Naive thymus-derived CD4-positive, alpha-beta T cell (primary cell): ENCODE measurements at regions of chr2 and their contacts with region 1.

Region 1: GRCh38 chr2:85420536-85421259 is 2.2 kb downstream of the SH2D6 start:
- DNase-seq: peak; percentile 73 to 96 (median 83)
- ATAC-seq: peak; percentile 88
- H3K4me3 ChIP-seq: peak overlapping the region; percentile 22
- H3K4me3 Mint-ChIP-seq: peak overlapping the region; percentile 60 to 96 (median 76)
- H3K27ac ChIP-seq: peak overlapping the region; percentile 23
- H3K27ac Mint-ChIP-seq: peak overlapping the region; percentile 38 to 100 (median 85)
- H3K4me1 ChIP-seq: peaks cover 20 to 22% of the 10 kb centered on the region in 2 donors
- H3K4me1 Mint-ChIP-seq: peaks cover 14 to 26% (median 16%) of the 10 kb centered on the region in 7 donors
- H3K27me3 ChIP-seq: no peaks in the 10 kb centered on the region
- H3K27me3 Mint-ChIP-seq: no peaks in the 10 kb centered on the region

Region 2: DNA sequence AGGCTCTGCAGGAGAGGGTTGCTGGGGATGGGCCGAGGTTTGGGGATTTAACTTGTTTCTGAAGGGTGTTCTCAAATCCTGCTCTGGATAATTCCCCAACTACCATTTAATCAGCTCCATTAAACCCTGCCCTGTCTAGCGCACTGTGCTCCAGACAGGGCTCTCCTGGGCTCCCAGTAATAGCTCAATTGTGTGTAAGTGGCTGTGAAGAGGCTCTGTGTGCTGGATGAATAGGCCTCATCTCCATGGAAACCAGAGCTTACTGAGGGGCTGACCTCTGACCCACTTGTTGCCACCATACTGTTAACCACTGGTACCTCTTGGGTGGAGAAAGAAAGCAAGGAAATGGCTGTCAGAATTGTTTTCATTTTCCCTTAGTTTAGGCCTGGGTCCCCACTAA is 185.8 kb before region 1 on chr2:
- CTCF ChIA-PET with region 1: no interaction called
- POLR2A ChIA-PET with region 1: no interaction called
- intact Hi-C with region 1: no loop called
- DNase-seq: no peak
- ATAC-seq: no peak
- H3K4me3 ChIP-seq: no peak overlapping the region
- H3K4me3 Mint-ChIP-seq: no peak overlapping the region
- H3K27ac ChIP-seq: no peak overlapping the region
- H3K27ac Mint-ChIP-seq: no peak overlapping the region
- H3K4me1 ChIP-seq: no peaks in the 10 kb centered on the region
- H3K4me1 Mint-ChIP-seq: peaks cover 0 to under 1% (median 0%) of the 10 kb centered on the region in 7 donors
- H3K27me3 ChIP-seq: no peaks in the 10 kb centered on the region
- H3K27me3 Mint-ChIP-seq: peaks cover 8 to 36% (median 29%) of the 10 kb centered on the region in 5 donors

Region 3: GRCh38 chr2:85390941-85391669 is 29.6 kb before region 1 on chr2:
- CTCF ChIA-PET with region 1: interaction called, 6 read pairs
- POLR2A ChIA-PET with region 1: interaction called, 5 read pairs
- intact Hi-C with region 1: loop called in 1 of 2 experiments (anchors 1 kb)
- DNase-seq: peak; percentile 52 to 79 (median 71)
- ATAC-seq: peak; percentile 76
- H3K4me3 ChIP-seq: no peak overlapping the region
- H3K4me3 Mint-ChIP-seq: no peak overlapping the region
- H3K27ac ChIP-seq: no peak overlapping the region
- H3K27ac Mint-ChIP-seq: peak overlapping the region in 5 of 9 donors; percentile 9 to 65 (median 38)
- H3K4me1 ChIP-seq: peaks cover 0 to 11% of the 10 kb centered on the region in 2 donors
- H3K4me1 Mint-ChIP-seq: peaks cover 5 to 27% (median 15%) of the 10 kb centered on the region in 7 donors
- H3K27me3 ChIP-seq: no peaks in the 10 kb centered on the region
- H3K27me3 Mint-ChIP-seq: no peaks in the 10 kb centered on the region

Region 4: DNA sequence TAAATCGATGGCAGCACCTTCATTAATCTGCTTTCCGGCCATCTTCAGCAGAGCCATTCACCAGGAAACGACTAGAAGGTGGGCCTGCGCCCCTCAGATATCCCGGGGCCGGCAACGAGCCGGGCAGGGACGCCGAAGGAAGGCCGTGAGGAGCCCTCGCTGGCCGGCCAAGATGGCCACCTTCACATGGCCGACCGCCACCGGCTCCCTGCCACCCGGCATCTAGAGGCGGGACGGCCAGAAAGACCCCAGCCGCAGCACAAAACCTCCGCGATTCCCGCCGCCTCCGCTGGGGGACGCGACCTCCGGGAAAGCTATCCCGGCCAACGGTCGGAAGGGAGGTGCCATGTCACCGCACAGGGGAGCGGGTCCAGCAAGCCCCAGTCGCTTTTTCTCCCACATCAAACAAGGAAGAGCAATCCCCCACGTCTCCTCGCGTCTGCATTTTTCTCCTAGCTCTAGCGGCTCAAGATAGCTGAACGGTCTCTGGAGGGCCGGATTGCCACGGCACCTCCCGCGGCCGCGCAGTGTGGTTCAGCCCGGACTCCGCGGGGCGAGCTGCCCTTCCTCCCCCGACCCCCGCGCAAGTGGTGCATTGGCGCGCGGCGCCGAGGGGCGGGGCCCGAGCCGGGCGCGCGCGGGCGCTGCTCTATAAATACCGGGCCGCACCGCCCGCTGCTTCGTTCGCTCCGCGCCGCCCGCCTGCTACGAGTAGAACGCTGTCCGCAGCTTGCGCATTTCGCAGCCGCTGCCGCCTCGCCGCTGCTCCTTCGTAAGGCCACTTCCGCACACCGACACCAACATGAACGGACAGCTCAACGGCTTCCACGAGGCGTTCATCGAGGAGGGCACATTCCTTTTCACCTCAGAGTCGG is 118.0 kb after region 1 on chr2 and contains the start of gene MAT2A:
- CTCF ChIA-PET with region 1: interaction called, 11 read pairs
- POLR2A ChIA-PET with region 1: interaction called, 74 read pairs
- intact Hi-C with region 1: loop called (anchors 1 kb)
- DNase-seq: peak; percentile 72 to 96 (median 88)
- ATAC-seq: peak; percentile 87
- H3K4me3 ChIP-seq: peak within 1 kb of the TSS; percentile 92
- H3K4me3 Mint-ChIP-seq: peak within 1 kb of the TSS; percentile 91 to 98 (median 95)
- H3K27ac ChIP-seq: peak within 1 kb of the TSS; percentile 84
- H3K27ac Mint-ChIP-seq: peak within 1 kb of the TSS; percentile 90 to 97 (median 94)
- H3K4me1 ChIP-seq: peaks cover 19 to 27% of the 10 kb centered on the region in 2 donors
- H3K4me1 Mint-ChIP-seq: peaks cover 14 to 58% (median 47%) of the 10 kb centered on the region in 7 donors
- H3K27me3 ChIP-seq: no peaks in the 10 kb centered on the region
- H3K27me3 Mint-ChIP-seq: no peaks in the 10 kb centered on the region
- total RNA-seq, gene MAT2A: 96.3 to 268 (median 178) TPM

Region 5: GRCh38 chr2:85595301-85596025 is 174.8 kb after region 1 on chr2 and contains the start of gene RNF181:
- CTCF ChIA-PET with region 1: no interaction called
- POLR2A ChIA-PET with region 1: interaction called, 11 read pairs
- intact Hi-C with region 1: loop called (anchors 1 kb)
- DNase-seq: peak; percentile 65 to 95 (median 90)
- ATAC-seq: peak; percentile 99
- H3K4me3 ChIP-seq: peak within 1 kb of the TSS; percentile 89
- H3K4me3 Mint-ChIP-seq: peak within 1 kb of the TSS; percentile 93 to 100 (median 98)
- H3K27ac ChIP-seq: peak within 1 kb of the TSS; percentile 88
- H3K27ac Mint-ChIP-seq: peak within 1 kb of the TSS; percentile 93 to 99 (median 97)
- H3K4me1 ChIP-seq: peaks cover 15 to 16% of the 10 kb centered on the region in 2 donors
- H3K4me1 Mint-ChIP-seq: peaks cover 25 to 48% (median 35%) of the 10 kb centered on the region in 7 donors
- H3K27me3 ChIP-seq: no peaks in the 10 kb centered on the region
- H3K27me3 Mint-ChIP-seq: no peaks in the 10 kb centered on the region
- total RNA-seq, gene RNF181: 38.5 to 118 (median 61.4) TPM

Region 6: GRCh38 chr2:85635636-85636035 is 214.9 kb after region 1 on chr2:
- CTCF ChIA-PET with region 1: no interaction called
- POLR2A ChIA-PET with region 1: interaction called, 3 read pairs
- intact Hi-C with region 1: loop called in 1 of 2 experiments (anchors 5 kb)
- DNase-seq: no peak
- ATAC-seq: no peak
- H3K4me3 ChIP-seq: no peak overlapping the region
- H3K4me3 Mint-ChIP-seq: peak overlapping the region in 1 of 10 donors; percentile 40
- H3K27ac ChIP-seq: no peak overlapping the region
- H3K27ac Mint-ChIP-seq: peak overlapping the region in 5 of 9 donors; percentile 1 to 5 (median 2)
- H3K4me1 ChIP-seq: no peaks in the 10 kb centered on the region
- H3K4me1 Mint-ChIP-seq: peaks cover 8 to 28% (median 14%) of the 10 kb centered on the region in 7 donors
- H3K27me3 ChIP-seq: no peaks in the 10 kb centered on the region
- H3K27me3 Mint-ChIP-seq: no peaks in the 10 kb centered on the region

Region 7: DNA sequence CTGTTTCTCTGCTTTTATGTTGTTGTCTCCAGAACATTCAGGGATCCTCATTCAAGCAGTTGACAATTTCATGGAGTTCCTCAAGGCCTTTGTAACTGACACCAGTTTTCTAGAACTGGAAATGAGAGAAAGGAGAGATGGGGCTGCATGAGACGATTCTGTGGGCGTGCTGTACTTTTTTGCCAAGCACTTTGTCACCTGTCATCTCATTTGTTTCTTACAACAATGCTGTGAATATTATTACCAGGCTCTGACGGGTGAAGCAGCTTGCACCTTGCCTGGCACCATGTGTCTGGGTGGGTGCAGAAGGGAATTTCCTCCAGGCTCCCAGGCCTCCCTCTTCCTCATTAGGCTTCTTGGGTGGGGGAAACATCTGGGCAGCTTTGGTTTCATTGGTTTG is 310.9 kb after region 1 on chr2:
- CTCF ChIA-PET with region 1: no interaction called
- POLR2A ChIA-PET with region 1: no interaction called
- intact Hi-C with region 1: no loop called
- DNase-seq: no peak
- ATAC-seq: no peak
- H3K4me3 ChIP-seq: no peak overlapping the region
- H3K4me3 Mint-ChIP-seq: no peak overlapping the region
- H3K27ac ChIP-seq: no peak overlapping the region
- H3K27ac Mint-ChIP-seq: no peak overlapping the region
- H3K4me1 ChIP-seq: peaks cover 0 to 8% of the 10 kb centered on the region in 2 donors
- H3K4me1 Mint-ChIP-seq: peaks cover 0 to 9% (median 0%) of the 10 kb centered on the region in 7 donors
- H3K27me3 ChIP-seq: no peaks in the 10 kb centered on the region
- H3K27me3 Mint-ChIP-seq: peaks cover 0 to 39% (median 15%) of the 10 kb centered on the region in 5 donors

Region 8: GRCh38 chr2:86195055-86195807 is 774.5 kb after region 1 on chr2 and contains the start of gene IMMT:
- CTCF ChIA-PET with region 1: no interaction called
- POLR2A ChIA-PET with region 1: no interaction called
- intact Hi-C with region 1: loop called (anchors 1 to 10 kb)
- DNase-seq: peak; percentile 86 to 96 (median 94)
- ATAC-seq: peak; percentile 94
- H3K4me3 ChIP-seq: peak within 1 kb of the TSS; percentile 74
- H3K4me3 Mint-ChIP-seq: peak within 1 kb of the TSS; percentile 86 to 99 (median 95)
- H3K27ac ChIP-seq: peak within 1 kb of the TSS; percentile 97
- H3K27ac Mint-ChIP-seq: peak within 1 kb of the TSS; percentile 82 to 97 (median 90)
- H3K4me1 ChIP-seq: peaks cover 15 to 23% of the 10 kb centered on the region in 2 donors
- H3K4me1 Mint-ChIP-seq: peaks cover 35 to 74% (median 60%) of the 10 kb centered on the region in 7 donors
- H3K27me3 ChIP-seq: no peaks in the 10 kb centered on the region
- H3K27me3 Mint-ChIP-seq: no peaks in the 10 kb centered on the region
- total RNA-seq, gene IMMT: 59.2 to 164 (median 77.0) TPM